ENCODE measurements at regions of chr2 and their contacts with region 1.

Region 1: GRCh38 chr2:101837354-101837753 is 139.8 kb downstream of the MAP4K4 start:
- DNase-seq: no peak
- ATAC-seq: no peak
- H3K4me3 Mint-ChIP-seq: no peak overlapping the region
- H3K27ac Mint-ChIP-seq: no peak overlapping the region
- H3K4me1 Mint-ChIP-seq: peaks cover 7% of the 10 kb centered on the region
- H3K27me3 Mint-ChIP-seq: no peaks in the 10 kb centered on the region
- CTCF ChIP-seq: no peak

Region 2: GRCh38 chr2:101679037-101679726 is 158.2 kb before region 1 on chr2:
- CTCF ChIA-PET with region 1: no interaction called
- POLR2A ChIA-PET with region 1: no interaction called
- intact Hi-C with region 1: no loop called
- DNase-seq: no peak
- ATAC-seq: no peak
- H3K4me3 Mint-ChIP-seq: no peak overlapping the region
- H3K27ac Mint-ChIP-seq: no peak overlapping the region
- H3K4me1 Mint-ChIP-seq: peaks cover 32% of the 10 kb centered on the region
- H3K27me3 Mint-ChIP-seq: no peaks in the 10 kb centered on the region
- CTCF ChIP-seq: no peak

Region 3: DNA sequence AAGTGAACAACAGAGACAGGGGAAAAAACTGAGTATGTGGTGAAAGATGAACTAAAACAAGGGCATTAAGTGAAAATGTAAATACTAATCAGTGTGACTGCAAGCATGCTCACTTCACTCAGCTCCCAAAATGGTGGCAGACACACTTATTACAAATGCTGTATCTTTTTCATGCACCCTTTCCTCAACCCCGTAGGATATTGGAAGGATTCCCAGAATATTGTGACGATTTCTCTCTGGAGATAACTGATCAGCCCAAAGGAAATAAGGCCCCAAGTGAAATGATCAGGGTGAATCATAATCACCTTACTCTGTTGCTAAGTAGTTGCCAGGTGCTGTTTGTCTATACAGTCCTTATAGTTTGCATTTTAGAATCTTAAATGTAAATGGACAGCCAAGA is 15.5 kb after region 1 on chr2:
- CTCF ChIA-PET with region 1: no interaction called
- POLR2A ChIA-PET with region 1: no interaction called
- intact Hi-C with region 1: loop called (anchors 2 kb)
- DNase-seq: no peak
- ATAC-seq: no peak
- H3K4me3 Mint-ChIP-seq: no peak overlapping the region
- H3K27ac Mint-ChIP-seq: no peak overlapping the region
- H3K4me1 Mint-ChIP-seq: no peaks in the 10 kb centered on the region
- H3K27me3 Mint-ChIP-seq: no peaks in the 10 kb centered on the region
- CTCF ChIP-seq: no peak